Esophagus muscularis mucosa (tissue), 4 donors: ENCODE measurements at regions of chr14 and their contacts with region 1.

Region 1: DNA sequence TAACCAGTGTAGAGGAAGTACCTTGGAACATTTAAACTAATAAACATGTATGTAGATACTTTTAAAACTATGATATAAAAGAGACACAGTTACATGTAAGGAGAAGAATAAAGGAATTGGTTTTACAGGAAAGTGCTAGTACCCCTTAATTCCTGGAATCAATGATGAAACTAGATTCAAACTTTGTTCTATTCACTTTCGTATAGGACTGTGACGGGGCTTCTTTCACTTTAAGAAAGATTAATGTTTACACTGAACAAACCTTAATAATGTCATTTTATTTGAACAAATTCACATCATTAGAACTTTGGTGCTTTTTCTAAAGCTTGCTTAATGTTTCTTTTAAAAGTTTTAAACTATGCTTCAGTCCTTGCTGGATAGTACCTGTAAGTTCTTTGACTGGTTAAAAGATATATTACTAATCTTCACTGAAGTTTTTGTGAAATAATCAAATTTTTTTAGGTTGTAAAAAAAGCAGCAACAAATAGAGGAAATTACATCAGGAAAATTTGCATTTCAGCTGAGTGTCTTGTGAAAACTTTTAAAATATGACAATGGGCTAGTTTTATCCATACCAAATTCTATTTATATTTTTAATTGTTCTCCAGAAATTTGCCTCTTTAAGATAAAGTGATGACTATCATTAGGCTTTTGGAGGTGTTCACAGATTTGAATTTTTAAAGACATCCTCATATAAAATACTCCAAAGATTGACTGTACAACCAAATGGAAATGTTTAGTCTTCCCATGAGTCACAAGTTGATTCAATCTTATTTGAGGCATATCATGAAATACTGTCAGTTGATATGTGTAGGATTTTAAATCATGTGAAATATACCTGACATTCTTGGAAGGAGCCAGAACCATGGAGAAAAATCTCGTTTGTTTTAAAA is 36.2 kb downstream of the PAPOLA start:
- DNase-seq: no peak
- H3K4me3 ChIP-seq: no peak overlapping the region
- H3K27ac ChIP-seq: no peak overlapping the region
- H3K4me1 ChIP-seq: no peaks in the 10 kb centered on the region
- H3K27me3 ChIP-seq: no peaks in the 10 kb centered on the region
- CTCF ChIP-seq: no peak
- EP300 ChIP-seq: no peak
- POLR2A ChIP-seq: no peak

Region 2: DNA sequence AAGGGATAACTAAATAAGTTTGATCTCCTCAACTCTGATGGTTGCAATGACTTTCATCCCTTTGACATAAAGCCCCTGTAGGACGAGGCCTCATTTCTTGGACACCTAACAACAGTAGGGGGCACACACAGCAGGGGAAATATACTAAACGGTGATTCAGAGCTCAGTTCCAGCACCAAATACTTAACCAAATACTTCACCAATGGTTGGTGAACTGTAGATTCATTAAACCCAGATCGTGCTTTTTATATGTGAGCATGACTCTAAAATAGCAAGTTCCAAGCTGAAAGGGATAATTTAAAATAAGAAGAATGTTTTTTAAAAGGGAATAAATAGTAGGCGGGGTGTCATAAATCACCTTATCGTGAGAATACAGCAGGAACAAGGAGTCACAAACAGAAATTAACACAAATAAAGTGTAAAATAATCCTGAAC is 228.4 kb before region 1 on chr14:
- intact Hi-C with region 1: loop called (anchors 10 kb)
- DNase-seq: no peak
- H3K4me3 ChIP-seq: no peak overlapping the region
- H3K27ac ChIP-seq: no peak overlapping the region
- H3K4me1 ChIP-seq: no peaks in the 10 kb centered on the region
- H3K27me3 ChIP-seq: no peaks in the 10 kb centered on the region
- CTCF ChIP-seq: no peak
- EP300 ChIP-seq: no peak
- POLR2A ChIP-seq: no peak